Ovary (tissue), 10 donors: ENCODE measurements at regions of chr12 and their contacts with region 1.

Region 1: GRCh38 chr12:110107369-110108281 is 16.5 kb upstream of the IFT81 start:
- DNase-seq: peak; percentile 64 to 76 (median 68)
- H3K4me3 ChIP-seq: no peak overlapping the region
- H3K27ac ChIP-seq: peak overlapping the region; percentile 6 to 84
- H3K4me1 ChIP-seq: peaks cover 16% of the 10 kb centered on the region
- H3K27me3 ChIP-seq: no peaks in the 10 kb centered on the region
- CTCF ChIP-seq: peak in 1 of 3 donors; percentile 7
- EP300 ChIP-seq: no peak
- POLR2A ChIP-seq: no peak

Region 2: GRCh38 chr12:109963743-109964429 is 143.7 kb before region 1 on chr12:
- intact Hi-C with region 1: no loop called
- DNase-seq: peak; percentile 27 to 57 (median 36)
- H3K4me3 ChIP-seq: no peak overlapping the region
- H3K27ac ChIP-seq: peak overlapping the region in 1 of 2 donors; percentile 48
- H3K4me1 ChIP-seq: no peaks in the 10 kb centered on the region
- H3K27me3 ChIP-seq: no peaks in the 10 kb centered on the region
- CTCF ChIP-seq: no peak
- EP300 ChIP-seq: no peak
- POLR2A ChIP-seq: no peak

Region 3: DNA sequence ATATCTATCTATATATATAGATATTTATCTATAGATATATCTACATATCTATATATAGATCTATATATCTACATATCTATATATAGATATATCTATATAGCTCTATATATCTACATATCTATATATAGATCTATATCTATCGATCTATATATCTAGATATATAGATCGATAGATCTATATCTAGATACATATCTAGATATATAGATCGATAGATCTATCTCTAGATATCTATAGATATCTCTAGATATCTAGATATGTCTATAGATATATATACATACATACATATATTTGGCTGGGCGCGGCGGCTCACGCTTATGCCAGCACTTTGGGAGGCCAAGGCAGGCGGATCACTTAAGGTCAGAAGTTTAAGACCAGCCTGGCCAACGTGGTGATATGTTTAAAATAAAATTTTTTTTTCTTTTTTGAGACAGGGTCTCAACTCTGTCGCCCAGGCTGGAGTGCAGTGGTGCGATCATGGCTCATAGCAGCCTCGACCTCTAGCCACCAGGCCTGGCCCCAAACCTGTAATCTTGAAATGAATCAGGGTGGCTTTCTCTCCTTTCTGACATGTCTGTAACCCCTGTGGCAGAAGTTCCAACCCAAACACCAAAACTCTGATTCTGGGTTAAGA is 324.4 kb after region 1 on chr12:
- intact Hi-C with region 1: loop called in 1 of 4 experiments (anchors 2 kb)
- DNase-seq: peak in 2 of 5 donors; percentile 39 to 47
- H3K4me3 ChIP-seq: peak overlapping the region; percentile 51
- H3K27ac ChIP-seq: no peak overlapping the region
- H3K4me1 ChIP-seq: no peaks in the 10 kb centered on the region
- H3K27me3 ChIP-seq: no peaks in the 10 kb centered on the region
- CTCF ChIP-seq: no peak
- EP300 ChIP-seq: no peak
- POLR2A ChIP-seq: no peak

Region 4: DNA sequence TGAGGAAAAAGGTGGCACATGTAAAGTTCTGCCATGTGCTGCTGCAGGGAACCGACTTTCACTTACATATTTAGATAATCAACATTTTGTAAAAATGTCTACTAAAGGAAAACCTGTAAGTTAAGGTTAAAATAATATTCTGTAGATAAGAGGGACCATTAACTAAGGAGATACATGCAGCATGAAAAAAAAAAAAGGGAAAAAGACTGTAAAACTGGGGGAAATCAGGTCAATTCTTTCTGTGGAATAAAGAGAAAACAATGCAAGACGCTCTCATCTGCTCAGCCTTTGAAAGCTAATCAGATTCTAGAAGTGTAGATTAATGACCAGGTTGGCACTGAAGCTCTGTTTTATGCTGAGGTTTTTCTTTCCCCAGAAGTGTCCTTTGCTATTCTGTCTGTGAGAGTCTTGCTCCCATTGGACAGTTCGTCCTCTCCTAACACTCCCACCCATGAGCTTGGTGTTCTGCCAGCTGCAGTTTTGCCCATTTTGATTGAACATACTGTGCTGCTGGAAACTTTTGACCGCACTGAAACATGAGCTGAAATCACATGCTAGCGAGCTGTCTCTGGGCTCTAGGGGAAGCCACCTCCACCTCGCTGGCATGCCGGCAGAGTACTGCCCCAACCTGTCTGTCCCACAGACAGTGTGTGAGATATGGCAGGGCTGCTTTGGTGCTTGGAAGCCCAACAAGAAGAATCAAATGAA is 435.8 kb after region 1 on chr12:
- intact Hi-C with region 1: no loop called
- DNase-seq: peak; percentile 93 to 96 (median 94)
- H3K4me3 ChIP-seq: no peak overlapping the region
- H3K27ac ChIP-seq: peak overlapping the region; percentile 24 to 74
- H3K4me1 ChIP-seq: peaks cover 7% of the 10 kb centered on the region
- H3K27me3 ChIP-seq: no peaks in the 10 kb centered on the region
- CTCF ChIP-seq: no peak
- EP300 ChIP-seq: no peak
- POLR2A ChIP-seq: no peak

Region 5: GRCh38 chr12:111529424-111530368 is 1422.1 kb after region 1 on chr12:
- intact Hi-C with region 1: no loop called
- DNase-seq: peak in 4 of 5 donors; percentile 32 to 54 (median 50)
- H3K4me3 ChIP-seq: no peak overlapping the region
- H3K27ac ChIP-seq: no peak overlapping the region
- H3K4me1 ChIP-seq: no peaks in the 10 kb centered on the region
- H3K27me3 ChIP-seq: no peaks in the 10 kb centered on the region
- CTCF ChIP-seq: peak in 2 of 3 donors; percentile 11 to 25
- EP300 ChIP-seq: no peak
- POLR2A ChIP-seq: no peak